ENCODE measurements at regions of chr10 and their contacts with region 1.

Region 1: GRCh38 chr10:69515699-69516259 is 57.4 kb downstream of the NEUROG3 start:
- DNase-seq: no peak
- H3K4me3 ChIP-seq: no peak overlapping the region
- CTCF ChIP-seq: peak; percentile 95

Region 2: GRCh38 chr10:69290993-69291392 is 224.8 kb before region 1 on chr10:
- CTCF ChIA-PET with region 1: no interaction called
- POLR2A ChIA-PET with region 1: no interaction called
- DNase-seq: no peak
- H3K4me3 ChIP-seq: no peak overlapping the region
- CTCF ChIP-seq: no peak

Region 3: GRCh38 chr10:69425511-69426298 is 90.1 kb before region 1 on chr10:
- CTCF ChIA-PET with region 1: interaction called, 16 read pairs
- POLR2A ChIA-PET with region 1: no interaction called
- DNase-seq: no peak
- H3K4me3 ChIP-seq: no peak overlapping the region
- CTCF ChIP-seq: no peak

Region 4: DNA sequence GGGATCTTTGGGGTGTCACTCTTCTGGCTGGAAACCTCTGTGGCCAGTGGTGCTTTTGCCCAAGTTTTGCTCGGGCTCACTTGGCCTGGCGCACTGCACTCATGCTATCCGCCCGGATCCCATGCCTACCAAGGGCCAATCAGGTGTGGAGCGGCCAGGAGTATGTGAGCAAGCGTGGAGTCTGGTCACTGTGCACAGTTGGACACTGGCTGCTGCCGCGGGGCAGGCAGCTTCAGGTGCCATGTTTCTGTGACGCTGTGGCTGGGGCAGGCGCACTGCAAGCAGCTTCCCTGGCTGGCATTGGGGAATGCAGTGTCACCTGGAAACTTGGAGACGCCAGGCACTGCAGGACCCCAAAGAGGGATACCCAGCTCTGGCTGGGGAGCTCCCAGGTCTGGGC is 12.2 kb after region 1 on chr10:
- CTCF ChIA-PET with region 1: interaction called, 21 read pairs
- POLR2A ChIA-PET with region 1: no interaction called
- DNase-seq: no peak
- H3K4me3 ChIP-seq: no peak overlapping the region
- CTCF ChIP-seq: no peak

Region 5: GRCh38 chr10:69629897-69630650 is 114.3 kb after region 1 on chr10 and contains the start of gene FAM241B:
- CTCF ChIA-PET with region 1: interaction called, 384 read pairs
- POLR2A ChIA-PET with region 1: no interaction called
- DNase-seq: no peak
- H3K4me3 ChIP-seq: peak within 1 kb of the TSS; percentile 30
- CTCF ChIP-seq: peak; percentile 87

Region 6: DNA sequence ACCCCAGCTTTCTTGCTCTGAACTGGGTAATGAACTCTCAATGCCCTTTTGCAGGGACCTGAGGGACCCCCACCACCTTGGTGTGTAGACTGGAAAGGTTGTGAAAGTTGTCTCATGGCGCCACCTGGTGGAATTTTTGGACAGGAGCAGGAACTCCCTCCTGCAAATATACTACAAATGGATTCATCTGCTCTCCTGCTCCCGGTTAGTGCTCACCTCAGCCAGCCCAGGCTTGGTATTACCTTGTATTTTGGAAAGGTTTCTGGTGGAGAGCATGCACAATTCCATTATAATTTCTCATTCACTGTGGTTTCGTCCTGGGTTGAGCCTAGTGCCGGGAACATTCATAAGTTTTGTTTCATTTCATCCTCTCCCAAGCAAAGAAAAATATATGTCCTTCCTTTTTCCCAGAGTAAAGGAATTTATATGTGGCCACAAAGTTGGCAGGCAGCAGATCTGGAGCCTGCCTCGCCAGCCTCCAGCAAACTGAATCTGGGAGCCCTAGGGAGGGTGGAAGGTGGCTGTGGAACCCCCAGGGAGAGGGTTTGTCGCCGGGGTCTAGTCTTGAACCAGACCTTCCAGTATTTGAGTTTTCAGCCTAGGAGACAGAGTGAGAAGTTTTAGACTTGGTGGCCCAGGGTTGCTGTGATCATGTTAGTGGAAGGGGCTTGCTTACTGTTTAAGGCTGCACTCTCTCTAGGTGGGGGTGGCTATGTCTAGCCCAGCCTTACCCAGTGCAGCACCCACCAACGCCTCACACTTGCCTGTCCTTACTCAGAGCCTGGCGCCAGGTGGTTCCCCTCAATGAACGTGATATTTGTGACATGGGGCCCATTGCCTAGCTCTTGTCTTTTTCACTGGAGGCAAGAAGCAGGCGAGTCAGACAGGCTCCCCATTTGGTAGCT is 123.8 kb after region 1 on chr10:
- CTCF ChIA-PET with region 1: interaction called, 384 read pairs
- POLR2A ChIA-PET with region 1: no interaction called
- DNase-seq: no peak
- H3K4me3 ChIP-seq: no peak overlapping the region
- CTCF ChIP-seq: peak; percentile 76